ENCODE measurements at regions of chr2 and their contacts with region 1.

Region 1: GRCh38 chr2:220569112-220569897 is 941.9 kb downstream of the SLC4A3 start:
- DNase-seq: no peak
- H3K4me3 ChIP-seq: no peak overlapping the region
- CTCF ChIP-seq: no peak
- POLR2A ChIP-seq: no peak

Region 2: GRCh38 chr2:220499225-220499624 is 70.1 kb before region 1 on chr2:
- intact Hi-C with region 1: no loop called
- DNase-seq: peak in 1 of 2 donors; percentile 16
- H3K4me3 ChIP-seq: no peak overlapping the region
- CTCF ChIP-seq: no peak
- POLR2A ChIP-seq: no peak

Region 3: GRCh38 chr2:221741496-221742211 is 1172.3 kb after region 1 on chr2:
- intact Hi-C with region 1: loop called (anchors 5 kb)
- DNase-seq: no peak
- H3K4me3 ChIP-seq: no peak overlapping the region
- CTCF ChIP-seq: no peak
- POLR2A ChIP-seq: no peak

Measured in lower leg skin (tissue), 4 donors.